AG04449 (cell line): ENCODE measurements at regions of chr17 and their contacts with region 1.

Region 1: GRCh38 chr17:10646392-10646990 is 10.6 kb downstream of the MYH3 start:
- DNase-seq: peak; percentile 5
- H3K4me3 ChIP-seq: no peak overlapping the region
- CTCF ChIP-seq: peak; percentile 90

Region 2: DNA sequence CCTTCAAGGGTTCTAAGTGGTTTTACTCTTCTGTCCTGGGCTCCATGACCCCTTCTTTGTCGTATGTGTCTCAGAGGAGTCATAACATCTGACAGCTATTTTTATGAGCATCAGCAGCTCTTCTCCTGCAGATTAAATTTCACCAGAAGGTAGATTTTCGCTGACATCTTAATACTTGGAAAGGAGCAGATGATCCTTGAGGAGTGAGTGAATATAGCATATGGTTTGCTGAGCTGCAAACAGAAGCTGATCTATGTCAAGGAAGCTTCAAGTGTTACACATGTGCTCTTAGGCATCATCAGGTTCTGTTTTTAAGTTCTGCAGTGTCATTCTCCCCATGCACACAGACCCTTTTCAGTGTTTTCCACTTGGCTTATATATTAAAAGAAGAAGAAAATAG is 47.9 kb before region 1 on chr17:
- CTCF ChIA-PET with region 1: no interaction called
- POLR2A ChIA-PET with region 1: no interaction called
- DNase-seq: no peak
- H3K4me3 ChIP-seq: no peak overlapping the region
- CTCF ChIP-seq: no peak

Region 3: DNA sequence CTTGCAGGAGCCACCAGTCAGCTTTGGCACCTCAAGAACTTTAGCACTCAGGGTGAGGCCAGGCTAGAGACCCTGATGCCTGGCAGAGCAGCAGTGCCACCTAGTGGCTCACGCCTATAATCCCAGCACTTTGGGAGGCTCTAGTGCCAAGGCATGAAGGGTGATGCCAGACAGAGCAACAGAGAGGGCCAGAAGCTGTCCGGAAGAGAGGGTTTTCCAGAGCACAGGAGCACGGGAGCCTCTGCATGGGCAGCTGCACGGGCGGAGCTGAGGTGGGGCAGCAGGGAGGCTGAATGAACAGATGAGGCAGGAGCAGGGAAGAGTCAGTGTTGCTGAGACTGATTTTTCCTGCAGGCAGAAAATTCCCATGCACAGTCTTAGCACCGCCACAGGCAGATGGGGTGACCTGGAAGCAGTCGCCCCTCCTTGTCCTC is 28.3 kb before region 1 on chr17:
- CTCF ChIA-PET with region 1: interaction called, 12 read pairs
- POLR2A ChIA-PET with region 1: no interaction called
- DNase-seq: no peak
- H3K4me3 ChIP-seq: no peak overlapping the region
- CTCF ChIP-seq: peak; percentile 92

Region 4: GRCh38 chr17:10661437-10661836 is 14.9 kb after region 1 on chr17:
- CTCF ChIA-PET with region 1: interaction called, 33 read pairs
- POLR2A ChIA-PET with region 1: no interaction called
- DNase-seq: no peak
- H3K4me3 ChIP-seq: no peak overlapping the region
- CTCF ChIP-seq: no peak

Region 5: GRCh38 chr17:10674704-10675103 is 28.2 kb after region 1 on chr17:
- CTCF ChIA-PET with region 1: interaction called, 177 read pairs
- POLR2A ChIA-PET with region 1: no interaction called
- DNase-seq: no peak
- H3K4me3 ChIP-seq: no peak overlapping the region
- CTCF ChIP-seq: no peak

Region 6: GRCh38 chr17:10697092-10698081 is 50.9 kb after region 1 on chr17 and contains the starts of genes ADPRM and SCO1:
- CTCF ChIA-PET with region 1: interaction called, 21 read pairs
- POLR2A ChIA-PET with region 1: no interaction called
- DNase-seq: peak; percentile 60
- H3K4me3 ChIP-seq: peak within 1 kb of the TSS; percentile 97
- CTCF ChIP-seq: peak; percentile 72

Region 7: DNA sequence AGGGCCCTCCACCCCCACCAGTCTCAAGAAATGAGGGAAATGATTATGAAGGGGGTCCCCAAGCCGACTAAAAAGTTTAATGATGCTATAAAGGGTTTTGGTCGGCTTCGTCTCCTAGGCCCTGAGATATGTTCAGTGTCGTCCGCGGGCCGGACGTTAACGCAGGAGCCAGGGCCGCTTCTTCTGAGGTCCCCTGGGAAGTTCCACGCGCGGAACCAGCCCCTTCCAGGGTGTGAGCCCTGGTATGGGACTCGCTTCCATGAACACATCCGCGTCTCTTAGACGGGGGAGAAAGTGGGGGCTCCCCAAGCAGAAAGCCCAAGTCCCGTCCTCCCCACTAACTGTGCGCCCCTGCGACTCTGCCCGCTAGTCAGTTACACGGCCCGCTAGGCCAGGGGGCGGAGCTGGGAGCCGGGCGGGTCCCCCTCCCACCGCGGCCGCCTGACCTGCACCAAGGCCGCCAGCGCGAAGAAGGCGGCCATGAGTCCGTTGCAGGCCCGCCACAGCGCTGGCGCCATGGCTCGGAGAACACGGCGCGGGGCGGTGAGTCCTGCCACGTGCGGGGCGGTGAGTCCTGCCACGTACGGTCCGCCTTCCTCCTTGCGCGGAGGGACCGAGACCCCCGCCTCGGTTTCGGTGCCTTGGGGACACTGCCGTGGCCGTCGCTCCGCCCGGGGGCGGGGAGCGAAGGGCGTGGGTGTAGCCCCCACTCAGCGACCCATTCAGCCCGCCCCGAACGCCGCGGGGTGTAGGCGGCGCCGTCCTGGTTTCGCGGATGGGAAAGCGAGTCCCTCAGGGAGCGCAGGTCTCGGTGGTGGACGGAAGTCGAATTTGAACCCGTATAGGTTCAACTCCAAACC is 83.1 kb after region 1 on chr17 and contains the start of gene TMEM220:
- CTCF ChIA-PET with region 1: interaction called, 18 read pairs
- POLR2A ChIA-PET with region 1: no interaction called
- DNase-seq: no peak
- H3K4me3 ChIP-seq: peak within 1 kb of the TSS; percentile 66
- CTCF ChIP-seq: no peak

Region 8: DNA sequence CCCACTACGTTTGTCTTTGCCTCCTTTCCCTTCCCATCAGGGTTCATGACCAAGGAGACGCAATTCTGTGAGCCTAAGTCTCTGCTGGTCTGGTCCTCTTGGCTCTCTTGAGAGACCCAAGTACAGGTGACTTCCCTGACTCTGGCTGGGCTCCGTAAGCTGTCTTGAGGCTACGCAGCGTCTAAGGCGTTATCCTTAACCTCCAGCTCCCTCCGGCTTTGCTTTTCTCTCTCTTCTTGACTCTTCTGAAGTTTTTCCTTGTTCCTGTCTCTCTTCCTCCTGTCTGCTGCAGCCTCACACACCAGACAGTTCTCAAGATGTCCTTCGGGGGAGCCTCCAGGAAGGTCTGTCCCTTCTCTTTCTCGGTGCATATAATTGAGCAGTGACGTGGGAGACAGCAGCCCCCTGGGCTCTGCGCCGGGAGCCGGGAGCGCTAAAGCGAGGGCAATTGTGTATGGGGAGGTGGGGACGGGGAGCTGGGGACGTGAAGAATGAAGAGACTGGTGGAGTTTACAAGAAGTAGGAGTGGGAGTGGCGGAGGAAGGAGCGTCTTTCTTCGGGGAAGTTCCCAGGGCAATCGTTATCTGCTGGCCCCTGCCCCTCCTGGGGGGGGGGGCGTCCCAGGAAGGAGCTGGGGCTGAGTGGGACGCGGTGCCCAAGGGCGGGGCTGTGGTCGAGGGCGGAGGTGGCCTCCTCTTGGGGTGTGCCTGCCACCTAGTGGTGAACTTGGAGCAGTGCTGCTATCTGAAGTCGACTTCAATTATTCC is 198.3 kb after region 1 on chr17:
- CTCF ChIA-PET with region 1: interaction called, 113 read pairs
- POLR2A ChIA-PET with region 1: no interaction called
- DNase-seq: peak; percentile 7
- H3K4me3 ChIP-seq: peak overlapping the region; percentile 54
- CTCF ChIP-seq: peak; percentile 89